ENCODE measurements at regions of chr15 and their contacts with region 1.

Region 1: GRCh38 chr15:89893696-89894455 is at the start of gene AP3S2:
- DNase-seq: peak; percentile 92 to 93
- H3K4me3 ChIP-seq: peak within 1 kb of the TSS; percentile 81
- H3K4me3 Mint-ChIP-seq: peak within 1 kb of the TSS; percentile 87
- H3K27ac Mint-ChIP-seq: peak within 1 kb of the TSS; percentile 97
- H3K4me1 ChIP-seq: no peaks in the 10 kb centered on the region
- H3K4me1 Mint-ChIP-seq: no peaks in the 10 kb centered on the region
- H3K27me3 ChIP-seq: no peaks in the 10 kb centered on the region
- H3K27me3 Mint-ChIP-seq: no peaks in the 10 kb centered on the region
- CTCF ChIP-seq: no peak
- total RNA-seq, gene AP3S2: 26.4 and 28.1 TPM in 2 replicates

Region 2: DNA sequence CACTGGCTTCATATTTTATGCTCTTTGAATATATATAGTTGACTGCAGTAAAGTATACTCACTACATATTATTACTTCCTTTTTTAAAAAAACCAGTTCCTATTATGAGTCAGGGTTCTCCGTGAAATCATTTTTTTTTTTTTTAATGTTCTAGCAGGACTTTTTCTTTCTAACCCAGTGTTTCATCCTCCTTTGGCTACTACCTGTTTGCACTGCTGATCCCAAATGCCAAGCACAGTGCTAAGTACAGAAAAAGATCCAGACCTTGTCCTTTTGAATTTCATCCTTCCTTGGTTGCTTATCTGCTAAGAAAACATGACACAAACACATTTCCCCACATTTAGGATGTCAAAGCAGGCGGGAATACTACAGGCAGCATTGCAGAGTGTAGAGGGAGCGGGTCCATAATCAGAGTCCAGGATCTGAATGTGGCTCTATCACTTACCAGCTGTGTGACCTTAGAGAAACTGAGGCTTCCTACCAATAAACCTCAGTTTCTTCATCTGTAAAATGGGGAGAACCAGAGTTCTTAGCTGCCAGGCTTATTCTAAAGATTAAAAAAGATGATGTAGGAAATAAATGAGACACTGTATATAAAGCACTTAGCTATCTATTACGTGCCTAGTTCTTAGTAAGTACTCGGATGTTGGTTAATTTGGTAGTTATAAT is 42.1 kb before region 1 on chr15:
- CTCF ChIA-PET with region 1: no interaction called
- POLR2A ChIA-PET with region 1: no interaction called
- intact Hi-C with region 1: no loop called
- DNase-seq: no peak
- H3K4me3 ChIP-seq: no peak overlapping the region
- H3K4me3 Mint-ChIP-seq: no peak overlapping the region
- H3K27ac Mint-ChIP-seq: no peak overlapping the region
- H3K4me1 ChIP-seq: peaks cover 25% of the 10 kb centered on the region
- H3K4me1 Mint-ChIP-seq: peaks cover 15% of the 10 kb centered on the region
- H3K27me3 ChIP-seq: no peaks in the 10 kb centered on the region
- H3K27me3 Mint-ChIP-seq: no peaks in the 10 kb centered on the region
- CTCF ChIP-seq: no peak

Region 3: DNA sequence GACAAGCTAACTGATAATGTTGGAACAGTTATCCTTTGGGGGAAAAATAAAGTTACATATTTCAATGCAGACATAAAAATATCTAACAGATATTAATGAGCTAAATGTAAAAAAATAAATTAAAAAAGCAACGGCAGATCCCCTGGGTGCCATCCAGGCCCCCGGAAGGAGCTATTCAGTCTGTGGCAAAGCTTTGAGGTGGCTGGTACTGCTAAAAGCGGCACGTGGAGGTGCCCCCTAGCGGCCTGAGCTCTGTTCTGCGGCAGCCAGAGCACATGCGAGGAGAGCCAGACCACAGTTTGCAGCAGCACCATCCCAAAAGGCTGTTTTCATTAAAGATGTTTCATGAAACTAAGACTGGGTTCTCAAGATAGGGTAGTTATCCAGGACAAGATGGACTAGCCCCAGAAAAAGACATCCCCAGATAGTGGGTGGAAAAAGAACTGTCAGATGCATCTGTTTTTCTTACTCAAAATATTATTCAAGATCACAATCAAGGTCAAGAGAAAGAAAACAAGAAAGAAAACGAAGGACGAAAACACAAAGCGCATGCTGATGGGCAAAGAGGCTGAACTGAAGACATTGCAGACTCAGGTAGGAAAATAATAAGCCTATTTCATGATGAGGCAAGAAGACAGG is 18.8 kb before region 1 on chr15:
- CTCF ChIA-PET with region 1: interaction called, 7 read pairs
- POLR2A ChIA-PET with region 1: interaction called, 12 read pairs
- intact Hi-C with region 1: no loop called
- DNase-seq: peak; percentile 76 to 82
- H3K4me3 ChIP-seq: no peak overlapping the region
- H3K4me3 Mint-ChIP-seq: no peak overlapping the region
- H3K27ac Mint-ChIP-seq: no peak overlapping the region
- H3K4me1 ChIP-seq: peaks cover 6% of the 10 kb centered on the region; the same call in 1 of the 2 replicates
- H3K4me1 Mint-ChIP-seq: no peaks in the 10 kb centered on the region
- H3K27me3 ChIP-seq: no peaks in the 10 kb centered on the region
- H3K27me3 Mint-ChIP-seq: no peaks in the 10 kb centered on the region
- CTCF ChIP-seq: peak; percentile 88 to 94

Region 4: DNA sequence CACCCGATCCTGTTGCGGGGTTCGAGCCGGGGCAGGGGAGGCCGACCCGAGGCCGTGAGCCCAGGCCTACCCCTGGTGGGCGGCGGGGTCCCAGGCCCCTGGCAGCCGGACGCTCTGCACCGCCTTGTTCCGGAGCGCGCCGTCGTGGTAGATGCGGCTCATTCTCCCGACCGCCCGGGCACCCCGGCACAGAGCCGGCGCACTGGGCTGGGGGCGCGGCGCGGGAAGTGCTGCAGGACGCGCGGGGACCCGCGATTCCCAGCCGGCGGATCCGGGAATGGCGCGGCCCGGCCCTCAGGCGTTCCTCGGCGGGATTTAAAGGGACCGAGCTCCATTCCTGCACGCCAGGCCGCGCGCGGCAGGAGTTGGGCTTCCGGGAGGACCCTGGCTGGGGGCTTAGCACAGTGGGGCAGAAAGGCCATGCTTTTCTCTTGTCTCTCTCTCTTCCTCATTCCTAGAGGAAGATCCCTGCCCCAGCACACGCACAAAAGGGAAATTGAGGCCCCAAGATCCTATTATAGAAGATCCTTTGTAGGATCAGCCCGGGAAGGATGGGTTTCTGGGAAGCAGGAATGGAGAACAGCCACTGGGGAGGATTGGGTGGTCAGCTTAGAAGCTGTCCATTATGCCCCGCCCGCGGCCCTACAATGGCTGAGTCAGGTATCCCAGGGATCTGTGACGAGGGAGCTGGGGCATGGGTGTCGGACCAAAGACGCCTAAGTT is 19.0 kb after region 1 on chr15 and contains the start of gene ARPIN:
- CTCF ChIA-PET with region 1: interaction called, 4 read pairs
- POLR2A ChIA-PET with region 1: no interaction called
- intact Hi-C with region 1: loop called (anchors 2 kb)
- DNase-seq: peak; percentile 67 to 77
- H3K4me3 ChIP-seq: peak within 1 kb of the TSS; percentile 54
- H3K4me3 Mint-ChIP-seq: peak within 1 kb of the TSS; percentile 84
- H3K27ac Mint-ChIP-seq: peak within 1 kb of the TSS; percentile 75
- H3K4me1 ChIP-seq: peaks cover 23% of the 10 kb centered on the region
- H3K4me1 Mint-ChIP-seq: peaks cover 33% of the 10 kb centered on the region
- H3K27me3 ChIP-seq: no peaks in the 10 kb centered on the region
- H3K27me3 Mint-ChIP-seq: no peaks in the 10 kb centered on the region
- CTCF ChIP-seq: no peak
- total RNA-seq, gene ARPIN: 11.5 and 13.3 TPM in 2 replicates

Region 5: DNA sequence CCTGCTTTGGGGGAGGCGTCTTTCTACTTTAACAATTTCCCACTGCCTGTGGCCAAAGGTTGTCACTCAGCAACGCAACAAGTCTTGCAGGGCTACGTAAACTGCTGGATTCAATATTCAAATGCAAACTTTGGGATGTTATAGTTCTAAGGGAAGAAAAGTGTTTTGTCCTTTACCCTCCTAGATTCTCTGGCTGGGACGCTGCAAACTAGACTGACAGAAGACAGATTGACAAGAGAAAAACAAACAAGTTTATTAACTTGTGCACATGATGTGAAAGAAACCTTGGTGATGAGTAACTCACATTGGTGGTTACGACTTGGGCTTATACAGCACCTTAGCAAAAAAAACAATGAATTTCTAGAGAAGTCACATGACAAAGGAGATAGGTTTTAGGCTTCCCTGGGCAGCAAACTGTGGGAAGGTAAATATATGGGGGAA is 52.9 kb after region 1 on chr15:
- CTCF ChIA-PET with region 1: no interaction called
- POLR2A ChIA-PET with region 1: no interaction called
- intact Hi-C with region 1: no loop called
- DNase-seq: peak; percentile 15 to 36
- H3K4me3 ChIP-seq: peak overlapping the region; percentile 7; the same call in 1 of the 2 replicates
- H3K4me3 Mint-ChIP-seq: peak overlapping the region; percentile 65
- H3K27ac Mint-ChIP-seq: no peak overlapping the region
- H3K4me1 ChIP-seq: peaks cover 16% of the 10 kb centered on the region
- H3K4me1 Mint-ChIP-seq: peaks cover 13% of the 10 kb centered on the region
- H3K27me3 ChIP-seq: no peaks in the 10 kb centered on the region
- H3K27me3 Mint-ChIP-seq: no peaks in the 10 kb centered on the region
- CTCF ChIP-seq: no peak

Region 6: GRCh38 chr15:89971592-89971997 is 77.7 kb after region 1 on chr15:
- CTCF ChIA-PET with region 1: interaction called, 26 read pairs
- POLR2A ChIA-PET with region 1: no interaction called
- intact Hi-C with region 1: loop called (anchors 1 kb)
- DNase-seq: peak; percentile 71 to 77
- H3K4me3 ChIP-seq: no peak overlapping the region
- H3K4me3 Mint-ChIP-seq: no peak overlapping the region
- H3K27ac Mint-ChIP-seq: no peak overlapping the region
- H3K4me1 ChIP-seq: no peaks in the 10 kb centered on the region
- H3K4me1 Mint-ChIP-seq: no peaks in the 10 kb centered on the region
- H3K27me3 ChIP-seq: no peaks in the 10 kb centered on the region
- H3K27me3 Mint-ChIP-seq: peaks cover 2% of the 10 kb centered on the region
- CTCF ChIP-seq: peak; percentile 61 to 90

Region 7: GRCh38 chr15:90071208-90071807 is 177.4 kb after region 1 on chr15:
- CTCF ChIA-PET with region 1: interaction called, 5 read pairs
- POLR2A ChIA-PET with region 1: interaction called, 3 read pairs
- intact Hi-C with region 1: loop called (anchors 1 kb)
- DNase-seq: peak; percentile 74 to 78
- H3K4me3 ChIP-seq: no peak overlapping the region
- H3K4me3 Mint-ChIP-seq: no peak overlapping the region
- H3K27ac Mint-ChIP-seq: no peak overlapping the region
- H3K4me1 ChIP-seq: peaks cover 14% of the 10 kb centered on the region
- H3K4me1 Mint-ChIP-seq: peaks cover 14% of the 10 kb centered on the region
- H3K27me3 ChIP-seq: no peaks in the 10 kb centered on the region
- H3K27me3 Mint-ChIP-seq: no peaks in the 10 kb centered on the region
- CTCF ChIP-seq: peak; percentile 72 to 73

Region 8: GRCh38 chr15:90086868-90087268 is 193.0 kb after region 1 on chr15:
- CTCF ChIA-PET with region 1: interaction called, 11 read pairs
- POLR2A ChIA-PET with region 1: no interaction called
- intact Hi-C with region 1: loop called (anchors 1 kb)
- DNase-seq: peak; percentile 57 to 65
- H3K4me3 ChIP-seq: no peak overlapping the region
- H3K4me3 Mint-ChIP-seq: no peak overlapping the region
- H3K27ac Mint-ChIP-seq: no peak overlapping the region
- H3K4me1 ChIP-seq: no peaks in the 10 kb centered on the region
- H3K4me1 Mint-ChIP-seq: no peaks in the 10 kb centered on the region
- H3K27me3 ChIP-seq: no peaks in the 10 kb centered on the region
- H3K27me3 Mint-ChIP-seq: no peaks in the 10 kb centered on the region
- CTCF ChIP-seq: peak; percentile 79 to 81

Measured in Caco-2 (cell line).